A549 (cell line): ENCODE measurements at regions of chr6 and their contacts with region 1.

Region 1: DNA sequence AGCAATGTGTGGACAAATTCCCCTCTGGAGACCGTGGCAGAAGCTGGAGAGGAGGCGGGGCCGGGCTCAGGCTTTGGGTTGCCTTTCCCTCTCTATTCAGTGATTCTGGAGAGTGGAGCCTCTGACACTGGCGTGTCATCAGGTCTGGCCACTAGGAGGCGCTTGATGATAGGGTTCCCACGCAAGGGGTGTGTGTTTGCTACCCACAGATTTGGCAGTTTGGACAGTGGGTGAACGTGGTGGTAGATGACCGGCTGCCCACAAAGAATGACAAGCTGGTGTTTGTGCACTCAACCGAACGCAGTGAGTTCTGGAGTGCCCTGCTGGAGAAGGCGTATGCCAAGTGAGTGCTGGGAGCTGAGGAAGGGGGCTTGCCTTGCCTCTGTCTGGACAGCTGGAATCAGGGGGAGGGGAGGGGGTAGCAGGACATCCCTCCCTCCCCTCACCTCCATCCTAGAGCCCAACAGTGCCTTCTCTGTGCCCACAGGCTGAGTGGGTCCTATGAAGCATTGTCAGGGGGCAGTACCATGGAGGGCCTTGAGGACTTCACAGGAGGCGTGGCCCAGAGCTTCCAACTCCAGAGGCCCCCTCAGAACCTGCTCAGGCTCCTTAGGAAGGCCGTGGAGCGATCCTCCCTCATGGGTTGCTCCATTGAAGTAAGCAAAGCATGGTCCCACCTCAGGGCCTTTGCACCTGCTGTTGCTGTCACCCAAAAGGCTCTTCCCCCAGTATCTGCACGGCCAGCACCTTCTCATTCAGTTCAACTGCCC is 14.3 kb downstream of the CAPN11 start:
- DNase-seq: peak; percentile 62 to 87
- ATAC-seq: peak; percentile 94 to 97
- H3K4me3 ChIP-seq: no peak overlapping the region
- H3K27ac ChIP-seq: no peak overlapping the region
- H3K4me1 ChIP-seq: no peaks in the 10 kb centered on the region
- CTCF ChIP-seq: peak; percentile 72
- EP300 ChIP-seq: no peak
- POLR2A ChIP-seq: no peak
- RAD21 ChIP-seq: peak; percentile 82 to 89

Region 2: DNA sequence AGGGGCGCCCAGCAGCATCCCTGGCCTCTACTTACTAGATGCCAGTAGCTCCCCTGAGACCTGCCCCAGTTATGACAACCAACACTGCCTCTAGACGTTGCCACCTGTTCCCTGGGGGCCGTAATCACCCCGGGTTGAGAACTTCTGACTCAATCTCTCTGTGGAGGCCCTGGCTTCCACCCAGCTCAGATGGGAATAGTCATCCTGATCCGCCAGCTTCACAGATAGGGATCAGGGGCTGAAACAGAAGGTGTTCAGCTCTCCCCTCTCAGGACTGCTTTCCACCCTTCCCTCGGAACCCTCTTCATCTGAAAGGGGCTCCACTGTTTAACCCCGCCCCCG is 10.9 kb before region 1 on chr6:
- CTCF ChIA-PET with region 1: interaction called, 31 read pairs
- POLR2A ChIA-PET with region 1: no interaction called
- DNase-seq: no peak
- ATAC-seq: peak in 1 of 2 experiments; percentile 19; a peak in 2 of 6 replicates
- H3K4me3 ChIP-seq: no peak overlapping the region
- H3K27ac ChIP-seq: no peak overlapping the region
- H3K4me1 ChIP-seq: no peaks in the 10 kb centered on the region
- CTCF ChIP-seq: no peak
- EP300 ChIP-seq: no peak
- POLR2A ChIP-seq: no peak
- RAD21 ChIP-seq: no peak

Region 3: DNA sequence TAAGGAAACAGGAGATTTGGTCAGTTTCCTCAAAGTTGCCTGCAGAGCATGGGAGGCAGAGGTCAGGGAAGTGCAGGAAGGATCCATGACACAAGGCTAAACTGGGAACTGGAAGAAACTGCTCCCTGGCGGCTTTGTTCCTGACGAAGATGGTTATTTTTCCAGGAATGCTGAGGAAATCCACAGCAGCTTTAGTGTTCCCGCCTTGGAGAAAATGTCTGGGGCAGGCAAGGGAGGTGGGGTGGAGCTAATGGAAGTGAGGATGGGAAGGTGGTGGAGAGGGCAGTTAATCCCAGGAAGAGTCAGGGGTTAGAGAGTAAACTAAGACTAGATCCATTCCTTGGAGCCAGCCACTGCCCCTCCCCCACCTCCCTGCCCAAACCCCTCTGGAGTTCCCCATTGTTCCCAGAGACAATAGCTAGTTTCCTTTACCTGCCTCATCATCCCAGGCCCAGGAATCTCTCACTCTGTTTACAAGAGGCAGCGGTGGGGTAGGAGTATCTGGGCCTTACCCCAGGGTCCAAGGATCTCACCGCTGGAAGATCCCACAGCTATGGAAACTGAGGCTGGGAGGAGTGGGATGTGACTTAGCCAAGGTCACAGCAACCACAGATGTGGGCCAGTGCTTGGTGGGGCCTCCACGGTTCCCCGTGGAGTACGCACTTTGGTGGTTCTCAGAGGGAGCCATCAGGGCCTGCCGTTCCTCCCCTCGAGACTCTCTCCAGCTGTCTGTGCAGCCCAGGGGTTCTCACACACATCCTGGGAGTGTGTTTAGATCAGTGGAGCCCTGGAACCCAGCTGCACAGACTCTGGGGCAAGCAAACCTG is 29.8 kb after region 1 on chr6:
- CTCF ChIA-PET with region 1: interaction called, 16 read pairs
- POLR2A ChIA-PET with region 1: no interaction called
- DNase-seq: no peak
- ATAC-seq: no peak
- H3K4me3 ChIP-seq: no peak overlapping the region
- H3K27ac ChIP-seq: no peak overlapping the region
- H3K4me1 ChIP-seq: peaks cover 12% of the 10 kb centered on the region
- CTCF ChIP-seq: no peak
- EP300 ChIP-seq: no peak
- POLR2A ChIP-seq: no peak
- RAD21 ChIP-seq: no peak

Region 4: GRCh38 chr6:44237813-44238433 is 65.0 kb after region 1 on chr6:
- CTCF ChIA-PET with region 1: interaction called, 23 read pairs
- POLR2A ChIA-PET with region 1: no interaction called
- DNase-seq: peak; percentile 64 to 69
- ATAC-seq: peak; percentile 80 to 87
- H3K4me3 ChIP-seq: peak overlapping the region; percentile 62
- H3K27ac ChIP-seq: peak overlapping the region; percentile 94 to 96
- H3K4me1 ChIP-seq: peaks cover 39% of the 10 kb centered on the region
- CTCF ChIP-seq: peak; percentile 81
- EP300 ChIP-seq: no peak
- POLR2A ChIP-seq: peak; percentile 16; the same call in 1 of the 2 replicates
- RAD21 ChIP-seq: peak; percentile 21 to 52; a peak in 2 of 5 replicates